ENCODE measurements at regions of chr1 and their contacts with region 1.

Region 1: GRCh38 chr1:41573785-41574713 is 89.6 kb upstream of the EDN2 start:
- DNase-seq: peak; percentile 86
- H3K4me3 ChIP-seq: peak overlapping the region in 1 of 2 experiments; percentile 43; a peak in 1 of 4 replicates
- H3K27ac ChIP-seq: no peak overlapping the region; a peak in 1 of 4 replicates
- H3K4me1 ChIP-seq: peaks cover 4 to 18% of the 10 kb centered on the region in 2 experiments; a peak in 3 of 4 replicates
- H3K27me3 ChIP-seq: no peaks in the 10 kb centered on the region
- CTCF ChIP-seq: peak; percentile 96
- EP300 ChIP-seq: no peak
- RAD21 ChIP-seq: peak; percentile 100

Region 2: DNA sequence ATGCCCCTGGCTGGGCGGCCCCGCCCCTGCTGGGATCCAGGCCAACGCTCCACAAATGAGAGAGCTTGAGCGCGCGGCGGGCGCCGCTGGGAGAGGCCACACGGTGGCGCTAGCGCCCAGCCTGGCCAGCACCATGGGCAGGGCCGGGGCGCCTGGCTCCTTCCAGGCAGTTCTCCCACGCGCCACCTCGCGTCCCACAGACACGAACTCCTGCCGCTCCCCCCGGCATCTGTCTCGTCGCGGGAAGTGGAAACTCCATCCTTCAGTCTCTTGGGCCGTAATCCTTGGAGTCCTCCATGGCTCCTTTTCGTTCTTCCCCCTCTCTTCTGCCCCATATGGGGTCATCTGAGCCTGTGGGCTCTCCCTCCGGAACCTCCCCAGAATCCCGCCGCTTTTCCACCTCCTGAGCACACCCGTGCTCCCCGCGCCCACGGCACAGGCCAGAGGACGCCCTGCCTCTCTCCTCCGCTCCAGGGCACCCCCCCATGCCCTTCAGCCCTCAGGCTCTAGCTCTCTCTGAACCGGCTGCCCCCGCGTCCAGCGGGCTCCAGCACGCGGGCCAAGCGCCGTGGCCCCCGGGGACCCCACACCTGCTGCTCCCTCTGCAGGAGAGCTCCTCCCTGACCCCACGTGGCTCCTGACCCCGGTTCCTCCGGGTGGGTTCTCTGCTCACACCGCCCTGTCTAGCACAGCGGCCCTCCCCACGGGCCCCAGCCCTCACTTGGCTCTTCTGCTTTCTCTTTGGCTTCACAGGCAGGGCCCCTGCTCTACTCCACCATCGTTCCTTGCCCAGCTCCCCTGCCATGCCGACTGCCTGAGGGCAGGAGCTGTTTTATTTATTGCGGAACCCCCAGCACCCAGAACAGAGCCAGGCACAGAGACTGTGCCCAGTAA is 57.6 kb before region 1 on chr1:
- CTCF ChIA-PET with region 1: interaction called, 30 read pairs
- POLR2A ChIA-PET with region 1: no interaction called
- DNase-seq: peak; percentile 97
- H3K4me3 ChIP-seq: peak overlapping the region; percentile 21 to 44; a peak in 2 of 4 replicates
- H3K27ac ChIP-seq: no peak overlapping the region; a peak in 1 of 4 replicates
- H3K4me1 ChIP-seq: peaks cover 4 to 48% of the 10 kb centered on the region in 2 experiments; a peak in 3 of 4 replicates
- H3K27me3 ChIP-seq: no peaks in the 10 kb centered on the region
- CTCF ChIP-seq: peak; percentile 73
- EP300 ChIP-seq: peak in 1 of 2 experiments; percentile 9; a peak in 1 of 4 replicates
- RAD21 ChIP-seq: peak; percentile 76

Region 3: GRCh38 chr1:41589395-41589794 is 15.3 kb after region 1 on chr1:
- CTCF ChIA-PET with region 1: interaction called, 26 read pairs
- POLR2A ChIA-PET with region 1: interaction called, 5 read pairs
- DNase-seq: no peak
- H3K4me3 ChIP-seq: no peak overlapping the region
- H3K27ac ChIP-seq: no peak overlapping the region
- H3K4me1 ChIP-seq: no peaks in the 10 kb centered on the region
- H3K27me3 ChIP-seq: no peaks in the 10 kb centered on the region
- CTCF ChIP-seq: no peak
- EP300 ChIP-seq: no peak
- RAD21 ChIP-seq: no peak

Region 4: GRCh38 chr1:41613689-41614574 is 39.9 kb after region 1 on chr1:
- CTCF ChIA-PET with region 1: interaction called, 18 read pairs
- POLR2A ChIA-PET with region 1: no interaction called
- DNase-seq: peak; percentile 80
- H3K4me3 ChIP-seq: no peak overlapping the region
- H3K27ac ChIP-seq: peak overlapping the region; percentile 49 to 98
- H3K4me1 ChIP-seq: peaks cover 0 to 40% of the 10 kb centered on the region in 2 experiments; a peak in 2 of 4 replicates
- H3K27me3 ChIP-seq: no peaks in the 10 kb centered on the region
- CTCF ChIP-seq: no peak
- EP300 ChIP-seq: peak; percentile 93 to 98
- RAD21 ChIP-seq: peak; percentile 39

Region 5: DNA sequence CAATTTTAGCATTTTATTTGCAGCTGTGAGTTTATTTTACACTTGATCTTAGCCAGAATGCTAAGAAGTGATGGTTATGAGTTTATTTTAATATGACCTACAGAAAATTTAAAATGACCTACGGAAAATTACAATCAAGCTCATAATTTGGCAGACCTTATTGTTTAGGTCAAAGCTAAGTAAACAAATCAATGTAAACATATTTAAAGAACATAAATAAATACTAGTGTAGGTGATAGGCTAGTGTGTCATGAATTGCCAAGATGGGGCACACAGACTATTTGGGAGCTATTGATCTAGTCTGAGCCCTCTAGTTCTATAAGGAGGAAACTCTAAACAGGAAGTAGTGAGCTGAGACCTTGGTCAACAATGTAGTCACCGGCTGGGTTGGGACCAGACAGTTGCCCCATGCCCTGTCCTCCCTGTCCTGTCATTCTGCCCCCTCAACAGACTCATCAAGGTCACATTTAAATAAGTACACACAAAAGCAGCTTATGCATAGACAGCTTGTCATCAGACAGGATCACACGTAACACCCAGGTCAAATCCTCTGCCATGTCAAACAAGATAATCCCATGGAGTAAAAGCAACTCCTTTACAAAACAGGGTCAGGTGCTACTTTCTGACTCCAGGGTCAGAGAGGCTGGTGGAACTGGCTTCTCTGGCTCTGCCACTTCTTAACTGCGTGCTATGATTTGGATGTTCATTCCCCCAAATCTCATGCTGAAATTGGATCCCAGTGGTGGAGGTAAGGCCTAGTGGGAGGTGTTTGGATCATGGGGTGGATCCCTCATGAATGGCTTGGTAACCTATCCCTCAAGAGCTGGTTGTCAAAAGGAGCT is 215.6 kb after region 1 on chr1:
- CTCF ChIA-PET with region 1: interaction called, 16 read pairs
- POLR2A ChIA-PET with region 1: no interaction called
- DNase-seq: no peak
- H3K4me3 ChIP-seq: no peak overlapping the region
- H3K27ac ChIP-seq: no peak overlapping the region
- H3K4me1 ChIP-seq: no peaks in the 10 kb centered on the region
- H3K27me3 ChIP-seq: no peaks in the 10 kb centered on the region
- CTCF ChIP-seq: no peak
- EP300 ChIP-seq: no peak
- RAD21 ChIP-seq: no peak

Region 6: GRCh38 chr1:42146626-42147320 is 572.7 kb after region 1 on chr1:
- CTCF ChIA-PET with region 1: interaction called, 10 read pairs
- POLR2A ChIA-PET with region 1: no interaction called
- DNase-seq: peak; percentile 85
- H3K4me3 ChIP-seq: no peak overlapping the region; a peak in 1 of 4 replicates
- H3K27ac ChIP-seq: no peak overlapping the region
- H3K4me1 ChIP-seq: no peaks in the 10 kb centered on the region
- H3K27me3 ChIP-seq: peaks cover 16% of the 10 kb centered on the region
- CTCF ChIP-seq: peak; percentile 85
- EP300 ChIP-seq: no peak
- RAD21 ChIP-seq: peak; percentile 94